ENCODE measurements at regions of chr5 and their contacts with region 1.

Region 1: DNA sequence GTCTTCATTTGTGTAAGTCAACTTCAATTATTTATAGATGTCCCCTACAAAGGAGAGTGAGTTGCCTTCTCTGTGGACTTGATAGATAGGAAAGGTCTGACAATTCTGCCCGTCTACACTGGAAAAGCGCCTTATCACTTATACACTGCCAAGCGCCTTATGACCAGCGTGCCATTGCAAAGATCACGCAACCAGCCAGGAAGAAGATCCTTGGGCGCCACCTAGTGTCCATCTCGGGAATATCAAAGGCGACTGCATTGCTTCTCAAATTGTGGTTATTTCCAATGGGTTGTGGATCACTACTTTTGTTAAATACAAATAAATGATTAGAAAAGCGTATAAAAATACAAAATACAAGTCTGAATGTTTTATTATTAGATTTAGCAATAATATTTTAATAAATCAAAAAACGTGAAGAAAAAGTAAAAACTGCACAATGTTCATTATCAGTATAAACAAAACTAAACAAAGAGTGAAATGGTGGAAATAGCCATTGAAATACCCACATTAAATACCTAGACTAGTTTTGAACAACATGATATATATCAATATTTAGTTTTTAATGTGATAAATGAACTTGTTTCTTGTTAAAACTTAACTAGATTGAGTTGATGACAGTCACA is 27.8 kb downstream of the SUB1 start:
- DNase-seq: peak; percentile 86
- H3K4me3 ChIP-seq: no peak overlapping the region
- H3K27ac ChIP-seq: peak overlapping the region in 3 of 4 donors; percentile 17 to 47 (median 31)
- H3K4me1 ChIP-seq: peaks cover 0 to 6% (median 5%) of the 10 kb centered on the region in 4 donors
- H3K27me3 ChIP-seq: no peaks in the 10 kb centered on the region
- CTCF ChIP-seq: peak; percentile 89 to 96 (median 94)
- EP300 ChIP-seq: no peak
- POLR2A ChIP-seq: no peak

Region 2: GRCh38 chr5:31786090-31786631 is 827.0 kb before region 1 on chr5:
- in situ Hi-C with region 1: no loop called
- intact Hi-C with region 1: no loop called
- DNase-seq: no peak
- H3K4me3 ChIP-seq: no peak overlapping the region
- H3K27ac ChIP-seq: no peak overlapping the region
- H3K4me1 ChIP-seq: no peaks in the 10 kb centered on the region
- H3K27me3 ChIP-seq: no peaks in the 10 kb centered on the region
- CTCF ChIP-seq: no peak
- EP300 ChIP-seq: no peak
- POLR2A ChIP-seq: no peak

Region 3: DNA sequence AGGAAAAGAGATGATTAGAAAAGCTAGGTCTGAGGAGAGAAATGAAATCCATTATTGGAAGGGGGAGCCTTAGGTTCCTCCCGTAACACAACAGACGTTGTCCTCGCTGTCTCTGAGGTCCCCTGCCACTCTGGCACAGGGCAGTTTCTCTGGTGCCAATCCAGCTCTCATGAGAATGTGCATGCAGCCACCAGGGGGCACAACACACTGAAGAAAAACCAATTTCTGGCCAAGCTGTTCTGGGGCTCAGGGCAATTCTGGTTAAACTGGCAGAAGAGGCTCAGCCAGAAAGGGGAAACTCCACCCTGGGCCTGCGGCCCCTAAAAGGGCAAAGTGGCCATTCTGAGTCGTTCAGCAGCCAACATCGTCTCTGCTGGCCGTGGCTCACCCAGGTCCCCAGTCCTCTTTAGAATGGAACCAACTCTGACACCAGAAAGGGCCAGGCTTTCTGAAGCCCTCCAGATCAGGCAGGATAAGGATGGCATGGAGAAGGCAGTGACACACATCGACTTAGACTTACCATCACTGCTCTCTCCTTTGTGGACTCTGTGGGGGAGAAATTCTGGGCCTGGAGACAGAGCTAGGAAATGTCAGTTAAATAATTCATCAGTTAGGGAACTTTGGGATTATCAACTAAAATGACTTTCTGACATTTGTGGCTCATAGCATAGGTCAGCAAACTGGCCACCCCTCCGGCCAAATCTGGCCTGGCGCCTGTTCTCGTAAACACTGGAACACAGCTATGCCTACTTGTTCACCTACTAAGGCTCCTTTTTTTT is 380.5 kb before region 1 on chr5:
- in situ Hi-C with region 1: loop called in 1 of 4 experiments (anchors 25 kb)
- intact Hi-C with region 1: no loop called
- DNase-seq: peak; percentile 86
- H3K4me3 ChIP-seq: no peak overlapping the region
- H3K27ac ChIP-seq: peak overlapping the region; percentile 42 to 70 (median 53)
- H3K4me1 ChIP-seq: peaks cover 4 to 32% (median 18%) of the 10 kb centered on the region in 4 donors
- H3K27me3 ChIP-seq: no peaks in the 10 kb centered on the region
- CTCF ChIP-seq: peak; percentile 77 to 92 (median 84)
- EP300 ChIP-seq: no peak
- POLR2A ChIP-seq: no peak

Region 4: DNA sequence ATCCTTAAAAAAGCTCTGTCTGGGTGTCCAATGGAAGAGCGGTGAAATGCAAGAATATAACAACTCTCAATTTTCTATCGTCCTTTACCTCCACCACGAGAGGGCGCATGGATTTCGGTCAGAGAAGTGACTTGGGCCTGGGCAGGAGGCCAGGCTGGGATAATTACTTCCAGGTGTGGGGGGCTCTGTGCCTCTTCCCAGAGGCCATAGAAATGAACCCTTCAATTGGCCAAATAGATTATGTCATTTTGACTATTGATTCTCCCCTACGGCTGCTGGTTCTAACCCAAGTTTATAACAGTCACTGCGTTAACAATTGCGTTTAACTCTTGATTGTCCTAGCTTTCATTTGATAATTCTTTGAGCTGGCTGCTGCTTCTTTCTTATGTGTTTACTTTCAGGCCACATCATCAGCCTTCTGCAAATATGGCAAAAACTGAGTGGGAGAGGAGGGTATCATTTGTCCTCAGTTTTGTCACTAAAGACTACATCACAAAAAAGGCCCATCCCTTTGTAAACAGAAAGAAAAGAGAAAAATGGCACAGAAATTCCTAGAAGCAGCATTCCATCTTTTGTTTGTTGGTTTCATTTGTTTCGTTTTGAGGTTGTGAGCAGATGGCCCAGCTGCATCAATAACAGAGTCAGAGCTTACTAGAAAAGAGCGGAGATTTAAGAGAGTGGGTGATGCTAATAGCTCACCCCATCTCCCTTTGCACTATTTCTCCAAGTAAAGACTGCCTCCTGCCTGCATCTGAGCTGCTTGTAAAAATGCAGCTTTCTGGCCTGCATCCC is 123.2 kb before region 1 on chr5:
- in situ Hi-C with region 1: loop called in 1 of 4 experiments (anchors 10 kb)
- intact Hi-C with region 1: no loop called
- DNase-seq: peak; percentile 76
- H3K4me3 ChIP-seq: no peak overlapping the region
- H3K27ac ChIP-seq: no peak overlapping the region
- H3K4me1 ChIP-seq: peaks cover 3 to 7% (median 4%) of the 10 kb centered on the region in 4 donors
- H3K27me3 ChIP-seq: no peaks in the 10 kb centered on the region
- CTCF ChIP-seq: peak; percentile 73 to 79 (median 75)
- EP300 ChIP-seq: no peak
- POLR2A ChIP-seq: no peak

Measured in transverse colon (tissue), 4 donors.